ENCODE measurements at regions of chr14 and their contacts with region 1.

Region 1: DNA sequence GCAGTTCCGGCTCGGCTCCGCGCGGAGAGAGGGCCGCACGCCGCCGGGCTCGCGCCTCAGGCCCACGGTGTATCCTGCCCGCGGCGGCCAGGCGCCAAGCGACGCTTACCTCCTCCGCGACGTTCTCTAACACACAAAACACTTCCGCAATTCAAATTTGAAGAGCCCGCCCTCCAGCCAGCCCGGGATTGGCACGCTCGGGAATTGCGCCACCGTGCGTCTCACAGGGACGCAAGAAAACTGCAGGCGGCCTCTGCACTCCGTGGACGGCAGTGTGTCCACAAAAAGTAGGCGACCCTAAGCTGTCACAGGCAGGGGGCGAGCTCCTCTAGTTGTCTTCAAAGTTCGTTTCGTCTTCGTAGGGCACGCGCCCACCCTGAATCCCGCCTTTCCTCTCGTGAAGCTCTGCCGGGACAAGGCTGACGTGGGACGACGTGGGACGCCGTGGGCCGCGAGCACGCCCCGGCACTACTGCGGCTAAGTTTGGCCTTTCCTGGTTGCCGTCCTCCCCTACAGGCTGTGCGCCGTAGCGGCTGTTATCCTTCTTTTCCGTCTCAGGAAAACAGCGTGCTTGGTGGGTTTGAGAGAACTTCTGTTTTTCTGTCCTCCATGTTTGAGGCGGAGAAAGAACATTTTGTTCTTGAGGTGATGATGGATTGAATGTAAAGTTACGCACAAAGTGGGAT is at the start of gene MIS18BP1:
- DNase-seq: peak; percentile 86 to 97 (median 92)
- ATAC-seq: peak; percentile 91
- H3K4me3 ChIP-seq: peak within 1 kb of the TSS; percentile 75
- H3K4me3 Mint-ChIP-seq: peak within 1 kb of the TSS; percentile 95
- H3K27ac ChIP-seq: peak within 1 kb of the TSS; percentile 69 to 84
- H3K27ac Mint-ChIP-seq: peak within 1 kb of the TSS; percentile 95
- H3K4me1 ChIP-seq: peaks cover 28% of the 10 kb centered on the region
- H3K4me1 Mint-ChIP-seq: peaks cover 28% of the 10 kb centered on the region
- H3K27me3 ChIP-seq: no peaks in the 10 kb centered on the region
- H3K27me3 Mint-ChIP-seq: no peaks in the 10 kb centered on the region
- CTCF ChIP-seq: peak; percentile 82
- total RNA-seq, gene MIS18BP1: 20.1 to 20.3 TPM

Region 2: DNA sequence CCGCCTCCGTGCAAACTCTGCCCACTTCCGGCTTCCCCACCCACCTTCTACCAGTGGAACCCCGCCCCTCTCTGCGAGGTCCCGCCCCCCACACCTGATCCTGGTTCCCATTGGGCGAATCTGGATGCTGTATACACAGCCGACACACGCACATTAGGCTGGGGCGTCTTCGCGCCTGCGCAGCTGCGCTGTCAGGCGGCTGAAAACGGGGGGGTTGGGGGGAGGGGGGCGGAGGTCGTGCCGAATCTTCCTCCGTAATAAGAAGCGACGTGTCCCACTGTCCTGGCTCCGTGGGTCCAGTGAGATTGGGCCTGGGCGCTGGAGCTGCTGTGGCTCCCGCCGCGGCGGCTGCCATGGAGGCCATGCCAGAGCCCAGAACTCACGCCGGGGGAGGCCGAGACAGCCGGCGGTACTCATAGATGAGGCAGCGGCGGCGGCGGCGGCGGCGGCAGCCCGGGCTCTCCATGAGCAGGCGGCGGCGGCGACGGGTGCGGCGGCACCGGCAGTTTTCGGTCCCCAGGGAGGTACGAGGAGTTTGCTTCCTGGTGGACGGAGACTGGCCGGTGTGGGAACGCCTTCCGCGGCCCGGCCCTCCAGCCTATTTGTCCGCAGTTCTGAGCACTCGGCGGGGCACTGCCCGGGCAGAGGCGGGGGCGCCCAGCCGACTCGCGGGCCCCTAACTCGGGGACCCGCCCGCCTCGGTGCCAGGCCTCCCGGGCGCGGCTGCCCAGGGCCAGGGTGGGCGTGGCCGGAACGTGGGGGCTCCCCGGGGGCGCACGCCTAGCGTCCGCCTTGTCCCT is 356.0 kb before region 1 on chr14:
- CTCF ChIA-PET with region 1: interaction called, 3 read pairs
- POLR2A ChIA-PET with region 1: interaction called, 8 read pairs
- intact Hi-C with region 1: loop called (anchors 2 kb)
- DNase-seq: peak; percentile 95 to 99 (median 98)
- ATAC-seq: peak; percentile 97
- H3K4me3 ChIP-seq: peak overlapping the region; percentile 69
- H3K4me3 Mint-ChIP-seq: peak overlapping the region; percentile 95
- H3K27ac ChIP-seq: peak overlapping the region; percentile 85
- H3K27ac Mint-ChIP-seq: peak overlapping the region; percentile 96
- H3K4me1 ChIP-seq: peaks cover 10% of the 10 kb centered on the region
- H3K4me1 Mint-ChIP-seq: peaks cover 39% of the 10 kb centered on the region
- H3K27me3 ChIP-seq: no peaks in the 10 kb centered on the region
- H3K27me3 Mint-ChIP-seq: no peaks in the 10 kb centered on the region
- CTCF ChIP-seq: no peak

Region 3: GRCh38 chr14:45083971-45084722 is 169.1 kb before region 1 on chr14 and contains the start of gene PRPF39:
- CTCF ChIA-PET with region 1: no interaction called
- POLR2A ChIA-PET with region 1: interaction called, 5 read pairs
- intact Hi-C with region 1: loop called (anchors 5 kb)
- DNase-seq: peak; percentile 88 to 98 (median 94)
- ATAC-seq: peak; percentile 91
- H3K4me3 ChIP-seq: peak within 1 kb of the TSS; percentile 78
- H3K4me3 Mint-ChIP-seq: peak within 1 kb of the TSS; percentile 98
- H3K27ac ChIP-seq: peak within 1 kb of the TSS; percentile 47 to 79
- H3K27ac Mint-ChIP-seq: peak within 1 kb of the TSS; percentile 89
- H3K4me1 ChIP-seq: peaks cover 25% of the 10 kb centered on the region
- H3K4me1 Mint-ChIP-seq: peaks cover 58% of the 10 kb centered on the region
- H3K27me3 ChIP-seq: no peaks in the 10 kb centered on the region
- H3K27me3 Mint-ChIP-seq: no peaks in the 10 kb centered on the region
- CTCF ChIP-seq: no peak
- total RNA-seq, gene PRPF39: 58.9 to 64.3 TPM

Region 4: DNA sequence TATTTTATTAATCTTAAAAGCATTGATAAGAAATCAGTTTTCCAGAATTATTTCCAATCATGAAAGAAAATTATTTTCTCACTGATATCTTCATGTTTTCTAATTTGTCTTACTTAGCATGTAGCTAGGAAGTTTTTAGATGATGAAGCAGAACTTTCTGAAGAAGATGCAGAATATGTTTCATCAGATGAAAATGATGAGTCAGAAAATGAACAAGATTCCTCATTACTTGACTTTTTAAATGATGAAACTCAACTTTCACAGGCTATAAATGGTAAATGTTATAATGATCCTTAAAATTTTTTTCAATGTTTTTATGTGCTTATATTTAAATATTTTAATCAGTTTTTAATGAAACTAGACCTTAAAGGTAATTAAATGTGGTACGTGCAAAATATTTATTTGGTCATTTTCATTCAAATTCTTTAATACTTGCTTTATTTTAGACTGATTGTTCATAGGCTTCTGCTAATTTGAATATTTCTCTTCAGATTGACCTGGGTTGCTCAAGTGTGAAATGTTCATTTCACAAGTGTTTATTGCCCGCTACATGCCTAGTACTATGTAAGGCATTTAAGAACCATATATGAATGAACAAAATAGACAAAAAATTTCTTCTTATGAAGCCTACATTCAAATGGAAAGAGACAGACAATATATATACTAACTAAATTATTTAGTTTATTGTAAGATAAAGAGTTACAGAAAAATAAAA is 68.0 kb before region 1 on chr14:
- CTCF ChIA-PET with region 1: no interaction called
- POLR2A ChIA-PET with region 1: no interaction called
- intact Hi-C with region 1: no loop called
- DNase-seq: no peak
- ATAC-seq: no peak
- H3K4me3 ChIP-seq: no peak overlapping the region
- H3K4me3 Mint-ChIP-seq: no peak overlapping the region
- H3K27ac ChIP-seq: no peak overlapping the region
- H3K27ac Mint-ChIP-seq: no peak overlapping the region
- H3K4me1 ChIP-seq: no peaks in the 10 kb centered on the region
- H3K4me1 Mint-ChIP-seq: no peaks in the 10 kb centered on the region
- H3K27me3 ChIP-seq: no peaks in the 10 kb centered on the region
- H3K27me3 Mint-ChIP-seq: no peaks in the 10 kb centered on the region
- CTCF ChIP-seq: no peak

Region 5: GRCh38 chr14:45267071-45267470 is 13.9 kb after region 1 on chr14:
- CTCF ChIA-PET with region 1: interaction called, 15 read pairs
- POLR2A ChIA-PET with region 1: interaction called, 9 read pairs
- intact Hi-C with region 1: no loop called
- DNase-seq: no peak
- ATAC-seq: no peak
- H3K4me3 ChIP-seq: no peak overlapping the region
- H3K4me3 Mint-ChIP-seq: no peak overlapping the region
- H3K27ac ChIP-seq: no peak overlapping the region
- H3K27ac Mint-ChIP-seq: no peak overlapping the region
- H3K4me1 ChIP-seq: no peaks in the 10 kb centered on the region
- H3K4me1 Mint-ChIP-seq: no peaks in the 10 kb centered on the region
- H3K27me3 ChIP-seq: no peaks in the 10 kb centered on the region
- H3K27me3 Mint-ChIP-seq: peaks cover 5% of the 10 kb centered on the region
- CTCF ChIP-seq: no peak

Region 6: GRCh38 chr14:45587142-45587541 is 333.9 kb after region 1 on chr14:
- CTCF ChIA-PET with region 1: no interaction called
- POLR2A ChIA-PET with region 1: no interaction called
- intact Hi-C with region 1: no loop called
- DNase-seq: no peak
- ATAC-seq: no peak
- H3K4me3 ChIP-seq: no peak overlapping the region
- H3K4me3 Mint-ChIP-seq: no peak overlapping the region
- H3K27ac ChIP-seq: no peak overlapping the region
- H3K27ac Mint-ChIP-seq: no peak overlapping the region
- H3K4me1 ChIP-seq: no peaks in the 10 kb centered on the region
- H3K4me1 Mint-ChIP-seq: no peaks in the 10 kb centered on the region
- H3K27me3 ChIP-seq: no peaks in the 10 kb centered on the region
- H3K27me3 Mint-ChIP-seq: no peaks in the 10 kb centered on the region
- CTCF ChIP-seq: no peak